ENCODE measurements at regions of chr14 and their contacts with region 1.

Region 1: GRCh38 chr14:22929104-22929847 is at the start of gene PRMT5:
- DNase-seq: peak; percentile 98 to 100 (median 99)
- H3K4me3 ChIP-seq: peak within 1 kb of the TSS; percentile 73
- H3K27ac ChIP-seq: peak within 1 kb of the TSS; percentile 77 to 92
- H3K4me1 ChIP-seq: peaks cover 3% of the 10 kb centered on the region
- H3K27me3 ChIP-seq: no peaks in the 10 kb centered on the region
- CTCF ChIP-seq: no peak
- EP300 ChIP-seq: no peak
- POLR2A ChIP-seq: peak; percentile 93
- total RNA-seq, gene PRMT5: 37.6 to 92.3 (median 65.4) TPM

Region 2: GRCh38 chr14:22829661-22830442 is 99.4 kb before region 1 on chr14 and contains the start of gene MRPL52:
- intact Hi-C with region 1: no loop called
- DNase-seq: peak; percentile 85 to 92 (median 89)
- H3K4me3 ChIP-seq: peak within 1 kb of the TSS; percentile 57
- H3K27ac ChIP-seq: peak within 1 kb of the TSS in 1 of 2 donors; percentile 15
- H3K4me1 ChIP-seq: no peaks in the 10 kb centered on the region
- H3K27me3 ChIP-seq: no peaks in the 10 kb centered on the region
- CTCF ChIP-seq: no peak
- EP300 ChIP-seq: peak; percentile 24
- POLR2A ChIP-seq: no peak
- total RNA-seq, gene MRPL52: 29.0 to 78.3 (median 54.1) TPM

Region 3: DNA sequence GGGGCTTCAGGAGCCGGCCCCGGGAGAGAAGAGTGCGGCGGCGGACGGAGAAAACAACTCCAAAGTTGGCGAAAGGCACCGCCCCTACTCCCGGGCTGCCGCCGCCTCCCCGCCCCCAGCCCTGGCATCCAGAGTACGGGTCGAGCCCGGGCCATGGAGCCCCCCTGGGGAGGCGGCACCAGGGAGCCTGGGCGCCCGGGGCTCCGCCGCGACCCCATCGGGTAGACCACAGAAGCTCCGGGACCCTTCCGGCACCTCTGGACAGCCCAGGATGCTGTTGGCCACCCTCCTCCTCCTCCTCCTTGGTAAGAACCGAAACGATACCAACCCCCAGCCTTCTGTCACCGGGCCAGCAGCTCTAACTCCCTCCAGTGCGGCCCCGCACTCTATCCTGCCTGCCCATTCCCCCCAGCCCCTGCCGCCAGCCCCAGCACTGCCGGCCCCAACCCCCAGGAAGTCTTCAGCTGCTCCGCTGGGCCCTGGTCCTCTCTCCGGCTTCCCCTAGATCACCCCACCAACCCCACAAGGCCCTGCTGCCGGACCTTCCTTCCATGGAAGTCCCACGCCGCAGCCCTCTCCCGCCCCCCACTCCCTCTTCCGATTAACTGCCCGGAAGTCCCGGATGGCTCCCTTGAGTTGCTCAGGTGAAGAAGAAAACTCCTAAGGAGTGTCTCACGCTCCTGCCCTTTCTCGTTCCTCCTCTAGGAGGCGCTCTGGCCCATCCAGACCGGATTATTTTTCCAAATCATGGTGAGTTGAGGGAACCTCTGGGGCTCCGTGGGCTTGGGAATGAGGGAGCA is 57.0 kb before region 1 on chr14:
- intact Hi-C with region 1: loop called in 1 of 4 experiments (anchors 2 kb)
- DNase-seq: peak; percentile 84 to 92 (median 90)
- H3K4me3 ChIP-seq: peak overlapping the region; percentile 86
- H3K27ac ChIP-seq: peak overlapping the region; percentile 96 to 98
- H3K4me1 ChIP-seq: peaks cover 4% of the 10 kb centered on the region
- H3K27me3 ChIP-seq: no peaks in the 10 kb centered on the region
- CTCF ChIP-seq: peak; percentile 83 to 93 (median 93)
- EP300 ChIP-seq: no peak
- POLR2A ChIP-seq: peak; percentile 53

Region 4: DNA sequence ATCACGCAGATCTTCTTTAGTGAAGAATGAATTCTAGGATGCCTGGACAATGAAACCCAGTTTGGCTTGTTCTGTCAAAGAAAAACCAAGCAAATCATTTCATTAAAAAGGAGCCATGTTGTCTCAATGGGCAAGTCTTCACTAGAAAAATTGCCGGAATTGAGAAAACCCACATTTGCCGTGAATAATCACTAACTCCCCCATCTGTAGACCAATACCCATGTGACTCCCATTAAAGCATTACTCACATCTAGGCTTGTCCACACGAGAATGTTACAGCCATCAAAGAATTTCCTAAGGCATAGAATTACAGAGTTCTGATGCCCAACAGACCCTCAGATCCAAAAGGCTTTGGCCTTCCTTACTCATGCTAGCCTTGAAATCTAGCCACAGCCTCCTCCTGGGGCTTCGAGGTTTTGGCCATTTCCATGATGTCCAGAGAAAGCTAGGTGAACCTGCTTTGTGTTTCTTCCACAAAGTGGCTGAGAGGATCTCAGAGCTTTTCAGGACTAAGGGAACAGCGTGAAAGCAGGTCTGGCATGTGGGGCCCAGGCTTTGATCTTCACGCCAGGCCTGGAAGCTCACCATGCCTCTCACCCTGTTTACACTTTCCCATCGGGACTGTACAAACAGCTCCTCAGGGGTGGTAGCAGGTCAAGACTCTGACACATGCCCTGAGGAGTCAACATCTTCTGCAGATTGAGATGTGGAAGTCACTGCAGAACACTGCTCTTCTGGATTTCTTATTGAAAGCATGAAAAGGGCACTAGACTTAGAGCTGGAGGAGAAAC is 242.1 kb after region 1 on chr14:
- intact Hi-C with region 1: no loop called
- DNase-seq: no peak
- H3K4me3 ChIP-seq: no peak overlapping the region
- H3K27ac ChIP-seq: no peak overlapping the region
- H3K4me1 ChIP-seq: peaks cover 4% of the 10 kb centered on the region
- H3K27me3 ChIP-seq: no peaks in the 10 kb centered on the region
- CTCF ChIP-seq: no peak
- EP300 ChIP-seq: no peak
- POLR2A ChIP-seq: no peak